HepG2 (cell line): ENCODE measurements at regions of chr6 and their contacts with region 1.

Region 1: DNA sequence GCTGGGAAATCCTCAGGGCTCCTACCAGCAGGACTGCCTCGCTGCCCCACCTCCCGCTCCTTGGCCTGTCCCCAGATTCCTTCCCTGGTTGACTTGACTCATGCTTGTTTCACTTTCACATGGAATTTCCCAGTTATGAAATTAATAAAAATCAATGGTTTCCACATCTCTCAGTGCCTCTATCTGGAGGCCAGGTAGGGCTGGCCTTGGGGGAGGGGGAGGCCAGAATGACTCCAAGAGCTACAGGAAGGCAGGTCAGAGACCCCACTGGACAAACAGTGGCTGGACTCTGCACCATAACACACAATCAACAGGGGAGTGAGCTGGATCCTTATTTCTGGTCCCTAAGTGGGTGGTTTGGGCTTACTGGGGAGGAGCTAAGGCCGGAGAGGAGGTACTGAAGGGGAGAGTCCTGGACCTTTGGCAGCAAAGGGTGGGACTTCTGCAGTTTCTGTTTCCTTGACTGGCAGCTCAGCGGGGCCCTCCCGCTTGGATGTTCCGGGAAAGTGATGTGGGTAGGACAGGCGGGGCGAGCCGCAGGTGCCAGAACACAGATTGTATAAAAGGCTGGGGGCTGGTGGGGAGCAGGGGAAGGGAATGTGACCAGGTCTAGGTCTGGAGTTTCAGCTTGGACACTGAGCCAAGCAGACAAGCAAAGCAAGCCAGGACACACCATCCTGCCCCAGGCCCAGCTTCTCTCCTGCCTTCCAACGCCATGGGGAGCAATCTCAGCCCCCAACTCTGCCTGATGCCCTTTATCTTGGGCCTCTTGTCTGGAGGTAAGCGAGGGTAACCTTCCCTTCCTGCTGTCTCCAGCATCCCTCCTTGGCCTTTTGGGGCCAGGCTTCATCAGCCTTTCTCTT is at the start of gene CFB:
- DNase-seq: peak; percentile 100
- ATAC-seq: peak; percentile 95
- H3K4me3 ChIP-seq: peak within 1 kb of the TSS; percentile 59 to 90 (median 66)
- H3K27ac ChIP-seq: peak within 1 kb of the TSS; percentile 91
- H3K4me1 ChIP-seq: peaks cover 85% of the 10 kb centered on the region
- H3K27me3 ChIP-seq: no peaks in the 10 kb centered on the region; a peak in 1 of 5 replicates
- CTCF ChIP-seq: peak; percentile 8; the same call in 1 of the 2 replicates
- EP300 ChIP-seq: peak; percentile 89 to 94; a peak in 3 of 4 replicates
- POLR2A ChIP-seq: peak in 1 of 2 experiments; percentile 96; a peak in 2 of 4 replicates
- RAD21 ChIP-seq: peak; percentile 40
- total RNA-seq, gene CFB: 71.1 and 171 TPM in 2 replicates

Region 2: GRCh38 chr6:31901953-31902643 is 43.6 kb before region 1 on chr6 and contains the start of gene ZBTB12:
- CTCF ChIA-PET with region 1: no interaction called
- POLR2A ChIA-PET with region 1: interaction called, 69 read pairs
- in situ Hi-C with region 1: loop called (anchors 5 kb)
- intact Hi-C with region 1: loop called (anchors 1 kb)
- DNase-seq: peak; percentile 96
- ATAC-seq: peak; percentile 76
- H3K4me3 ChIP-seq: peak within 1 kb of the TSS; percentile 65 to 78 (median 67)
- H3K27ac ChIP-seq: peak within 1 kb of the TSS; percentile 60
- H3K4me1 ChIP-seq: peaks cover 51% of the 10 kb centered on the region
- H3K27me3 ChIP-seq: peaks cover 1 to 13% of the 10 kb centered on the region in 2 experiments; a peak in 2 of 5 replicates
- CTCF ChIP-seq: peak; percentile 48
- EP300 ChIP-seq: peak in 1 of 2 experiments; percentile 30; a peak in 1 of 4 replicates
- POLR2A ChIP-seq: peak; percentile 58 to 78; a peak in 3 of 4 replicates
- RAD21 ChIP-seq: peak; percentile 88
- total RNA-seq, gene ZBTB12: 6.0 and 6.8 TPM in 2 replicates

Region 3: GRCh38 chr6:31908791-31909190 is 36.9 kb before region 1 on chr6:
- CTCF ChIA-PET with region 1: no interaction called
- POLR2A ChIA-PET with region 1: interaction called, 69 read pairs
- in situ Hi-C with region 1: loop called (anchors 5 kb)
- intact Hi-C with region 1: loop called (anchors 2 kb)
- DNase-seq: peak; percentile 60
- ATAC-seq: peak; percentile 16; the same call in 1 of the 3 replicates
- H3K4me3 ChIP-seq: no peak overlapping the region
- H3K27ac ChIP-seq: no peak overlapping the region
- H3K4me1 ChIP-seq: peaks cover 49% of the 10 kb centered on the region
- H3K27me3 ChIP-seq: peaks cover 1 to 6% of the 10 kb centered on the region in 2 experiments; a peak in 1 of 5 replicates
- CTCF ChIP-seq: no peak
- EP300 ChIP-seq: no peak
- POLR2A ChIP-seq: no peak
- RAD21 ChIP-seq: no peak

Region 4: GRCh38 chr6:31922942-31923341 is 22.8 kb before region 1 on chr6:
- CTCF ChIA-PET with region 1: no interaction called
- POLR2A ChIA-PET with region 1: interaction called, 151 read pairs
- in situ Hi-C with region 1: no loop called
- intact Hi-C with region 1: loop called (anchors 1 kb)
- DNase-seq: peak; percentile 73
- ATAC-seq: peak; percentile 44
- H3K4me3 ChIP-seq: no peak overlapping the region
- H3K27ac ChIP-seq: no peak overlapping the region
- H3K4me1 ChIP-seq: peaks cover 80% of the 10 kb centered on the region
- H3K27me3 ChIP-seq: no peaks in the 10 kb centered on the region; a peak in 1 of 5 replicates
- CTCF ChIP-seq: peak; percentile 84
- EP300 ChIP-seq: no peak
- POLR2A ChIP-seq: no peak
- RAD21 ChIP-seq: peak; percentile 77

Region 5: GRCh38 chr6:31958741-31959739 is 13.3 kb after region 1 on chr6 and contains the starts of genes NELFE and SKIC2:
- CTCF ChIA-PET with region 1: no interaction called
- POLR2A ChIA-PET with region 1: interaction called, 69 read pairs
- in situ Hi-C with region 1: no loop called
- intact Hi-C with region 1: no loop called
- DNase-seq: peak; percentile 97
- ATAC-seq: peak; percentile 97
- H3K4me3 ChIP-seq: peak within 1 kb of the TSS; percentile 81 to 98 (median 95)
- H3K27ac ChIP-seq: peak within 1 kb of the TSS; percentile 75
- H3K4me1 ChIP-seq: peaks cover 31% of the 10 kb centered on the region
- H3K27me3 ChIP-seq: no peaks in the 10 kb centered on the region; a peak in 1 of 5 replicates
- CTCF ChIP-seq: no peak
- EP300 ChIP-seq: peak; percentile 23 to 56; a peak in 2 of 4 replicates
- POLR2A ChIP-seq: peak; percentile 70 to 73
- RAD21 ChIP-seq: peak; percentile 64
- total RNA-seq, gene NELFE: 69.8 and 80.4 TPM in 2 replicates
- total RNA-seq, gene SKIC2: 59.7 and 67.1 TPM in 2 replicates

Region 6: DNA sequence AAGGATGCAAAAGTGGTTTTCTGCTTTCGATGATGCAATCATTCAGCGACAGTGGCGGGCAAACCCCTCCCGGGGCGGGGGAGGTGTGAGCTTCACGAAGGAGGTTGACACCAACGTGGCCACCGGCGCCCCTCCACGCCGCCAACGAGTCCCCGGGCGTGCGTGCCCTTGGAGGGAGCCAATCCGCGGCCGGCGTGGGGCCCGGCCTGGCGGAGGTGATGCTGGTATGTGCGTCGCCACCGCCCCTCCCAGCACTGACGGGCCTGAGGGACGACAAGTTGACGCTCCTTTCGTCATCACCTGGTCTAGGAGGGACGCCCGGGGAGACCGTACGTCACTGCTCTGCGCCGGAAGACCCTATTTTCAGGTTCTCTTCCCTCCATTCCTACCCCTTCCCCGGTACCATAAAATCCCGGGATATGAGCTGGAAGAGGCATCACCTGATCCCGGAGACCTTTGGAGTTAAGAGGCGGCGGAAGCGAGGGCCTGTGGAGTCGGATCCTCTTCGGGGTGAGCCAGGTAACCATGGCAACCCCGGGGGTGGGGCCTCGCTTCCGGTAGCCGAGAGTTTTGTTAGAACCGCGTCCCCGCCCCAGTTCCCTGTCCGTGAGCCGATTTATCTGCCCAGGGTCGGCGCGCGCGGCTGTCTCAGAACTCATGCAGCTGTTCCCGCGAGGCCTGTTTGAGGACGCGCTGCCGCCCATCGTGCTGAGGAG is 26.4 kb after region 1 on chr6 and contains the start of gene DXO:
- CTCF ChIA-PET with region 1: no interaction called
- POLR2A ChIA-PET with region 1: interaction called, 52 read pairs
- in situ Hi-C with region 1: no loop called
- intact Hi-C with region 1: no loop called
- DNase-seq: peak; percentile 98
- ATAC-seq: peak; percentile 86
- H3K4me3 ChIP-seq: peak within 1 kb of the TSS; percentile 73 to 94 (median 90)
- H3K27ac ChIP-seq: peak within 1 kb of the TSS; percentile 86
- H3K4me1 ChIP-seq: peaks cover 32% of the 10 kb centered on the region
- H3K27me3 ChIP-seq: no peaks in the 10 kb centered on the region; a peak in 1 of 5 replicates
- CTCF ChIP-seq: peak; percentile 17; the same call in 1 of the 2 replicates
- EP300 ChIP-seq: peak in 1 of 2 experiments; percentile 58; a peak in 1 of 4 replicates
- POLR2A ChIP-seq: peak; percentile 52 to 60; a peak in 3 of 4 replicates
- RAD21 ChIP-seq: peak; percentile 58
- total RNA-seq, gene DXO: 10.8 and 18.6 TPM in 2 replicates

Region 7: GRCh38 chr6:32271429-32271828 is 325.7 kb after region 1 on chr6:
- CTCF ChIA-PET with region 1: no interaction called
- POLR2A ChIA-PET with region 1: no interaction called
- in situ Hi-C with region 1: no loop called
- intact Hi-C with region 1: no loop called
- DNase-seq: no peak
- ATAC-seq: no peak
- H3K4me3 ChIP-seq: no peak overlapping the region
- H3K27ac ChIP-seq: no peak overlapping the region
- H3K4me1 ChIP-seq: no peaks in the 10 kb centered on the region
- H3K27me3 ChIP-seq: no peaks in the 10 kb centered on the region
- CTCF ChIP-seq: no peak
- EP300 ChIP-seq: no peak
- POLR2A ChIP-seq: no peak
- RAD21 ChIP-seq: no peak